MCF 10A (cell line): ENCODE measurements at regions of chr1 and their contacts with region 1.

Region 1: GRCh38 chr1:206635080-206635977 is at the start of gene DYRK3:
- DNase-seq: peak; percentile 99
- H3K4me3 Mint-ChIP-seq: peak within 1 kb of the TSS; percentile 89
- H3K27ac Mint-ChIP-seq: peak within 1 kb of the TSS; percentile 82
- H3K4me1 Mint-ChIP-seq: peaks cover 38% of the 10 kb centered on the region
- H3K27me3 Mint-ChIP-seq: no peaks in the 10 kb centered on the region
- CTCF ChIP-seq: no peak
- total RNA-seq, gene DYRK3: 45.4 and 58.5 TPM in 2 replicates

Region 2: DNA sequence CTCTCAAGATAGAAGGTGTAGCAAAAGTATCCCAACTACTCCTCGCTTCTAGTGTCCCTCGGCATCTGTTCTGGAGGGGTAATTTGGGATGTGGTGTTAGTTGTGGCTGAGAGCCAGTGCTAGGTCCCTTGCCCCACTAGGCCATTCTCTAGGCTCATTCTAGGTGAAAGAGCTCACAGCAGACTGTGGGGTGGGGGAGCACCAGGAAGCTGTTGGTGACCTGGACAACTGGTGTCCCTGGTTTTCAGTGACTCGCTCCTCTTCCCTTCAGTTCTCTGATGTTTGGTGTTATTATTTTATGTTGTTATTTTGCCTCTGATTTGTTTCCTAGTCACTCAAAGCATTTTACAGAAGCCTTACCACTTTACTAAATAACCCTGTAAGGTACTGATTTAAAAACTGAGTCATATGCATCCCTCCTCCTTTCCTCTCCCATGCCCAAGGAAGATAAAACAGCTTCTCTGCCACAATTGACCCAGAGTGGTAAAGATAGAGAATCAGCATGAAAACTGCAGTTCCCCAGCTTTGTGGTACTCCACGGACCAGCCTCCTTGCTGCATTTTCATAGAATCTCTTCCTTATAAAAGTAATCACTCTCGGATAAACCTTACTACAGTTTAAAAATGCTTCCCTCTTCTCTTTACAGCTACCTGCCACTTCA is 14.1 kb after region 1 on chr1:
- CTCF ChIA-PET with region 1: interaction called, 1,191 read pairs
- POLR2A ChIA-PET with region 1: interaction called, 39 read pairs
- intact Hi-C with region 1: no loop called
- DNase-seq: no peak
- H3K4me3 Mint-ChIP-seq: no peak overlapping the region
- H3K27ac Mint-ChIP-seq: no peak overlapping the region
- H3K4me1 Mint-ChIP-seq: peaks cover 16% of the 10 kb centered on the region
- H3K27me3 Mint-ChIP-seq: no peaks in the 10 kb centered on the region
- CTCF ChIP-seq: no peak

Region 3: GRCh38 chr1:206674745-206675175 is 39.4 kb after region 1 on chr1:
- CTCF ChIA-PET with region 1: interaction called, 1,191 read pairs
- POLR2A ChIA-PET with region 1: interaction called, 193 read pairs
- intact Hi-C with region 1: no loop called
- DNase-seq: peak; percentile 100
- H3K4me3 Mint-ChIP-seq: peak overlapping the region; percentile 48
- H3K27ac Mint-ChIP-seq: no peak overlapping the region
- H3K4me1 Mint-ChIP-seq: peaks cover 18% of the 10 kb centered on the region
- H3K27me3 Mint-ChIP-seq: no peaks in the 10 kb centered on the region
- CTCF ChIP-seq: no peak

Region 4: DNA sequence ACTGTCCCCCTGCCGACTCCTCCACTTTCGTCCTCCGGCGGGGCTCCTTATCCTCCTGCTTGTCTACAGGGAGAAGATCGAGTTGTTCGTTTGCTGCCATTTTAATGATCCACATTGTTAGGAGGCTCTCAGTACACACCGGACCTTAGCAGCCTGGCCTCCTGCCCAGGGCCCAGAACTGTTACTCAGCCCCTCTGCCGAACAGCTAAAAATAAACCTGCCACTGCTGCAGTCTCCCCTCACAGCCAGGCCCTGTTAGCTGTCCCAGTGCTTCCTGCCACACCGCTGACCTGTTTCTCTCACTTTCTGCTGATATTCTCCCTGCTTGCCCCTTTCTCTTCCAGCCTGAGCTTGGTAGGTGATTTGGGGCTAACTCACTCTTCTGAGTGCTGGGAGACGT is 57.7 kb after region 1 on chr1:
- CTCF ChIA-PET with region 1: interaction called, 46 read pairs
- POLR2A ChIA-PET with region 1: interaction called, 8 read pairs
- intact Hi-C with region 1: no loop called
- DNase-seq: no peak
- H3K4me3 Mint-ChIP-seq: no peak overlapping the region
- H3K27ac Mint-ChIP-seq: no peak overlapping the region
- H3K4me1 Mint-ChIP-seq: peaks cover 56% of the 10 kb centered on the region
- H3K27me3 Mint-ChIP-seq: no peaks in the 10 kb centered on the region
- CTCF ChIP-seq: no peak

Region 5: GRCh38 chr1:206772243-206772937 is 137.1 kb after region 1 on chr1 and contains the start of gene IL10:
- CTCF ChIA-PET with region 1: interaction called, 12 read pairs
- POLR2A ChIA-PET with region 1: no interaction called
- intact Hi-C with region 1: no loop called
- DNase-seq: no peak
- H3K4me3 Mint-ChIP-seq: no peak within 1 kb of the TSS
- H3K27ac Mint-ChIP-seq: no peak within 1 kb of the TSS
- H3K4me1 Mint-ChIP-seq: no peaks in the 10 kb centered on the region
- H3K27me3 Mint-ChIP-seq: peaks cover 52% of the 10 kb centered on the region
- CTCF ChIP-seq: no peak
- total RNA-seq, gene IL10: not detected in 2 replicates

Region 6: DNA sequence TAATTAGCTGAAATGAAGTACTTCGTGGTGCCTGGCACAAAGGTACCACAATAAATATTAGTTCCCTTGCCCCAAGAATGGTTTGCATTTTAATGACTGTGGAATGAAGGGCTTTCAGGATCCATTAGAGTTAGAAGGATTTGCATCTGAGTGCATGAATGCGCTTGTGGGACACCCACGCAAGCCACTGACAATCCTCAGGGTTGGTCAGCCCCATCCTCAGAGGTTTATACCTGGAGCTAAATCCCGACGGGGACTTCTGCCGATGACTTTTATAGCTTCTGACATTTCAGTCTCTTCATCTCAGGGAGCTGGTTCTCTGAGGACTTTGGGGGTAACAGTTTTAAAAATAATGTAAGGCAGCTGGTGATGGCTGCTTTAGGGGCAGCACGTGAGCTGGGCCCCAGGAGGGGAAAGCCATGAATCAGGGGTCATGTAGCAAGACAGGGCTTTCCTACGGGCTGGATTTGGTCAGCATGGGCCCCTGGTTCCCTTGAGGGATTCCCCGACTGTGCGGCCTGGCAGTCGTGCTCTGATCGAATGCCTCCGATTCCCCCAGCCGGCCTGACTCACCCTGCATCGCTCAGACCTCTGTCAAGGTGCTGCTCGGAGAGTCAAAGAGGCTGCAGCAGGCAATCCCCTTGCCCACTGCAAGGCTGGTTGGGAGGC is 157.7 kb after region 1 on chr1:
- CTCF ChIA-PET with region 1: no interaction called
- POLR2A ChIA-PET with region 1: no interaction called
- intact Hi-C with region 1: no loop called
- DNase-seq: no peak
- H3K4me3 Mint-ChIP-seq: no peak overlapping the region
- H3K27ac Mint-ChIP-seq: no peak overlapping the region
- H3K4me1 Mint-ChIP-seq: peaks cover 11% of the 10 kb centered on the region
- H3K27me3 Mint-ChIP-seq: peaks cover 8% of the 10 kb centered on the region
- CTCF ChIP-seq: no peak